Activated T-helper 1 cell treated with anti-CD3 and anti-CD28 coated beads, Interleukin-12 subunit alpha, Interleukin-12 subunit beta, Interleukin-2, Interleukin-4 antibody, amounts not matched to agents 30 ng/mL and 10 ng/mL and 1 ng/mL, durations not matched to agents 14 hours and 24 hours and 36 hours (primary cell): ENCODE measurements at regions of chr1 and their contacts with region 1.

Region 1: GRCh38 chr1:231603598-231604275 is 22.9 kb upstream of the DISC1 start:
- DNase-seq: no peak
- H3K4me3 Mint-ChIP-seq: peak overlapping the region; percentile 86
- H3K27ac Mint-ChIP-seq: peak overlapping the region; percentile 50
- H3K4me1 Mint-ChIP-seq: peaks cover 14% of the 10 kb centered on the region
- H3K27me3 Mint-ChIP-seq: peaks cover 12% of the 10 kb centered on the region

Region 2: DNA sequence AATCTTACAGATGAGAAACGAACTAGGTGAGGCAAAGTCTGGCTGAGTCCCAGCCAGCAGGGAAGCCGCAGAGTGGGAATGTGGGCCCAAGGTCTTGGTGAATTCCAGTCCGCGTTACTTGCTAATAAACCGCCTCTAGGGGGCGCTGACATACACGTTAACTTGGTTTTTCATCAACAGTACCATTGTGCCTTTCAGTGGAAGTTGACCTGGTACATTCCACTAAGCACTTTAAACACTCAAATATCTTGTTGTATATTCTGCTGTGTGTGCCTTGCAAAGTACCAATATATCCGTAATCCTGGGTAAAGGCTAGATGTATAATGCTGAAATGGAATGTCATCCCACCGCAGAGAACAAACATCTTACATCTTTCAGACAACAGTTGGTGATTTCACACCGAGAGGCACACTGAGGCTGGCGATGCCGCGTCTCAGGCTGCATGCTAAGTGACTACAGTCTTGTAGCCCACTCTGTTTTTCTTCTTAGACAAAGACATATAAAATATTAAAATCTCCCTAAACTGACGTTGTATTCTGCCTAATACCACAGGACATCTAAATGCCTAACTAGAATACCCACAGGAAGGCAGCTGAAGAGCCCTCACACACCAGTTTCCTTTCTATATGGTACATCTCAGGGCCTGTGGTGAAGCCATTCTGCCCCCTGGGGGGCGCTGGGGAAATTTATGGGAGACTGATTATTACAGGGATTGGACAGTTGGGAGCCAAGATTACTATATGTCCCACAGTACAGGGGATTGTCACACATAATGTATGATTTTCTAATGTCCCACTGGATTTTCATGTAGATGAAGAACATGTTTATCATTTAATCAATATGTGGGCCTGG is 686.2 kb before region 1 on chr1:
- intact Hi-C with region 1: loop called (anchors 5 kb)
- DNase-seq: peak; percentile 44
- H3K4me3 Mint-ChIP-seq: no peak overlapping the region
- H3K27ac Mint-ChIP-seq: no peak overlapping the region
- H3K4me1 Mint-ChIP-seq: no peaks in the 10 kb centered on the region
- H3K27me3 Mint-ChIP-seq: no peaks in the 10 kb centered on the region

Region 3: DNA sequence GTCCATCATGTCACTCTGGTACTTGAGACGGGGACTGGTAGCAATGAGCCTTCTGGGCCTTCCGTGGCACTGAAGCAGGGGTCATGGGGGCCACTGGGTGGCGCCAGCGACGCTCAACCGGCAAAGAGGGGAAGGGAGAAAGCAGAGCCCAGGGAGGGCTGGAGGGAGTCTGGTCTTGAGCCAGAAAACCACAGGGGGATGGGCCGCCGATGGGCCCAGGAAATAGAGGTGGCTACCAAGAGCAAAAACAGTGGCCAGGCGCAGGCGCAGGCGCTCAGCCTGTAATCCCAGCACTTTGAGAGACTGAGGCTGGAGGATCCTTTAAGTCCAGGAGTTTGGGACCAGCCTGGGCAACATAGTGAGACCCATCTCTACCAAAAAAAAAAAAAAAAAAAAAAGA is 287.9 kb before region 1 on chr1:
- intact Hi-C with region 1: loop called (anchors 1 kb)
- DNase-seq: peak; percentile 26
- H3K4me3 Mint-ChIP-seq: no peak overlapping the region
- H3K27ac Mint-ChIP-seq: peak overlapping the region; percentile 19
- H3K4me1 Mint-ChIP-seq: peaks cover 5% of the 10 kb centered on the region
- H3K27me3 Mint-ChIP-seq: peaks cover 3% of the 10 kb centered on the region

Region 4: DNA sequence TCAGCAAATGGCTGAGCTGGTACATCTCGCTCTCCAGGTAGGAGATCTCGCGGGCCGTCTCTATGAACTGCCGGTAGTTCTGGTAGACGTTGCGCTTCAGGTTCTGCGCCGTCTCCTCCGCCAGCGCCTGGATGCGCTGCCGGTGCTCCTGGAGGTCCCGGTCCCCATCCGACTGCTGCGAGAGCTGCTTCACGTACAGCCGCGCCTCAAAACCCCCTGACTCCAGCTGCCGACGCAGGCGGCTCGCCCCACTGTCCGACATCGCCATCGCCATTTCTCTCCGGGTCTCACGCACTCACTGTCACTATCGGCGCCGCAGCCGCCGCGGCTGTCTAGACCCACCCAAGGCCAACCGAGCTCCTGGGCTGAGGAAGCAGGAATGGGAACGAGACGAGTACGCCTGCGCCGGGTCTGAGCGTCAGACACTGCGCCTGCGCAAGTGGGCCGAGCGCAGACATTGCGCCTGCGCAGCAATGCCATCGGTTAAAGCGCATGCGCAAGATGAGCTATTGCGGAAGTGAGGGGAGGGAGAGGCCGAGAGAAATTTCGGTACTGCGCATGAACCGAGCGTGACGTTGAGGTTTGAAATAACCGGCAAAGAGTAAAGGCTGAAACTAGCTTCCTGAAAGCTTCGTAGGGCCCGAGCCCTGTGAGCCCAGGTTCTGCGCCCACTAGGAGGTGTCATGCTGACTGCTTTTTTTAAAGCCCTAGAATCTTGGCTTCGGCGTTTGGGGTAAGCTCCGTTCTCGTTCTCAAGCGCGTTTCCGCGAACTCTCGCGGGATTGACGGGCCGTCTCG is 266.1 kb before region 1 on chr1 and contains the start of gene EXOC8:
- intact Hi-C with region 1: loop called (anchors 1 kb)
- DNase-seq: peak; percentile 99
- H3K4me3 Mint-ChIP-seq: peak within 1 kb of the TSS; percentile 98
- H3K27ac Mint-ChIP-seq: peak within 1 kb of the TSS; percentile 100
- H3K4me1 Mint-ChIP-seq: peaks cover 62% of the 10 kb centered on the region
- H3K27me3 Mint-ChIP-seq: peaks cover 3% of the 10 kb centered on the region
- total RNA-seq, gene EXOC8: 14.4 and 15.6 TPM in 2 replicates

Region 5: GRCh38 chr1:231357831-231358354 is 245.8 kb before region 1 on chr1:
- intact Hi-C with region 1: loop called (anchors 1 kb)
- DNase-seq: no peak
- H3K4me3 Mint-ChIP-seq: no peak overlapping the region
- H3K27ac Mint-ChIP-seq: no peak overlapping the region
- H3K4me1 Mint-ChIP-seq: peaks cover 13% of the 10 kb centered on the region
- H3K27me3 Mint-ChIP-seq: no peaks in the 10 kb centered on the region

Region 6: DNA sequence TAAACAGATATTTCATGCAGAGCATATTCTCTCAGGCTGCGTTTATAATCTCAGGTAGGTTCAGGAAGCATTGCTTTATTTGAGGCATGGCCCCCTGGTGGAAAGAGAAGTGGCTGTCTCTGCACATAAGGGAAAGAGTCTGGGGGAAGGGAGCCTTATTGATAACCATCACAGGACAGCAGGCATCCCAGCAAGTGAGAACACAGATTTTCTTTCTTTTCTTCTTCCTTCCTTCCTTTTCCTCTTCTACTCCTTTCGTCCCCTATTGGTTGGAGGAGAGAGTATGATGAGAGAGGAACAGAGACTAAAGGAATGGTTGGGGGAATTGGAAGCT is 53.3 kb before region 1 on chr1:
- intact Hi-C with region 1: loop called (anchors 5 kb)
- DNase-seq: no peak
- H3K4me3 Mint-ChIP-seq: no peak overlapping the region
- H3K27ac Mint-ChIP-seq: no peak overlapping the region
- H3K4me1 Mint-ChIP-seq: peaks cover 13% of the 10 kb centered on the region
- H3K27me3 Mint-ChIP-seq: peaks cover 2% of the 10 kb centered on the region

Region 7: GRCh38 chr1:231676487-231676886 is 72.8 kb after region 1 on chr1:
- intact Hi-C with region 1: no loop called
- DNase-seq: no peak
- H3K4me3 Mint-ChIP-seq: no peak overlapping the region
- H3K27ac Mint-ChIP-seq: no peak overlapping the region
- H3K4me1 Mint-ChIP-seq: peaks cover 16% of the 10 kb centered on the region
- H3K27me3 Mint-ChIP-seq: no peaks in the 10 kb centered on the region

Region 8: GRCh38 chr1:231757101-231757404 is 153.3 kb after region 1 on chr1:
- intact Hi-C with region 1: no loop called
- DNase-seq: no peak
- H3K4me3 Mint-ChIP-seq: no peak overlapping the region
- H3K27ac Mint-ChIP-seq: no peak overlapping the region
- H3K4me1 Mint-ChIP-seq: no peaks in the 10 kb centered on the region
- H3K27me3 Mint-ChIP-seq: no peaks in the 10 kb centered on the region